Left ventricle myocardium superior (tissue), 1 donor: ENCODE measurements at regions of chr7 and their contacts with region 1.

Region 1: DNA sequence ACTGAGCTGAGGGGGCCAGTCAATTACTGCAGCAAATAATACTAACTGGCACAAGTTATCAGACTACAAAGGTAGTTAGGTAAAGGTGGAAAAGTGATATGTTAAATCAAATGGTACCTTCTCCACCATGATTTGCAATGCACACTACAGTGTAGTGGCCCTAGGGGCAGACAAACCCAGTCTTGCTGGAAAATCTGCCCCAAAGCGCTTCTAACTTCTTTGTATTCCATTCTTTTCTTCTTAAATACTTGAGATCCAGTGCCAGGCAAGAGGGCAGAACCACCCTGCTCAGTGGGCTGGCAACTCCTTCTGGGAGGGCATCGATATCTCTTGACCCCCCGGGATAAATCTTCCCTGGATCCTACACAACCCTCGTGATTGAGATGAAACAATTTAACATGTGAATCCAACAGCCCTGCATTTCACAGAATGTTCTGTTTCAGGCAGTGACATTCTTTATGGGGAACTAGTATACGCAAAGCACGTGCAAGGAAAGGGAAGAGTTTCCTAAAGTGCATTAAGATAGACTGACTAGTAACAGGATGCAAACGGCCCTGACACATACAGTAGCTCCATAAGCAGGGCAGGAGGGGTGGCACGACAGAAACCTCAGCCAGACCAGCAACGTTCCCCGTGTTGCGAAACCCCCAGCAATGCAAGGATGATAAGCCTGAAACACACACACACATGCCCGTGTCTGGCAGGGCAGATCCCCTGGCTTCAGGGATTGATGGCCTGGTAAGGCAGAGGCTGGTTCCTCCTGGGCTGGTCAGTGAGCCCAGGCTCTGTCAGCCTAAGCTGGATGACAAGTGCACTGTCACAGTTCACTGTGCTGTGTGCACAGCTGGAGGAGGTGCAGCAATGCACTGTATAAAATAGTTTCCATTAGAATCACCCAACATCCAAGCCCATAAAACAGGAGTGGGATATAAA is 89.2 kb downstream of the GSAP start:
- DNase-seq: peak; percentile 49
- ATAC-seq: peak; percentile 56

Region 2: GRCh38 chr7:77247206-77247850 is 79.6 kb before region 1 on chr7:
- intact Hi-C with region 1: loop called (anchors 5 kb)
- DNase-seq: peak; percentile 78
- ATAC-seq: peak; percentile 34

Region 3: DNA sequence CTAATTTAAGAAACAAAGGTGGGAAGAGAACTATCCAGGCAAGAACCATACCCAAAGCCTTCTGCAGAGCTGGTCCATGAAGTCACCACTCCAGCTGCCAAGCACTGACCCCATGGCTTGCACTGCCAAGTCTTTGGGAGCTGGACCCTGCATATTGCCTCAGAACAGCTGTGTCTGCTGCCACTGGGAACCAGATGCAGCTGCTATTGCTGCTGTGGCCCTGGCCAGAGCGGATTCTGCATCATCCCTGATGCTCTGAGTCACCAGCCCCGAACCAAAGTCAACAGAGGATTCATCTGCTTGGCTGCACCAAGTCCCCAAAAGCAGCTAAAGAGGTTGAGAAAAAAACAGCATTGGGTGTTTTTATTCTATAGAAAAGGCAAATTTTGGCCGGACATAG is 128.4 kb after region 1 on chr7:
- intact Hi-C with region 1: no loop called
- DNase-seq: peak; percentile 63
- ATAC-seq: peak; percentile 90